Activated T-helper 1 cell treated with anti-CD3 and anti-CD28 coated beads, Interleukin-12 subunit alpha, Interleukin-12 subunit beta, Interleukin-2, Interleukin-4 antibody, amounts not matched to agents 30 ng/mL and 10 ng/mL and 1 ng/mL, durations not matched to agents 14 hours and 24 hours and 36 hours (primary cell): ENCODE measurements at regions of chr9 and their contacts with region 1.

Region 1: DNA sequence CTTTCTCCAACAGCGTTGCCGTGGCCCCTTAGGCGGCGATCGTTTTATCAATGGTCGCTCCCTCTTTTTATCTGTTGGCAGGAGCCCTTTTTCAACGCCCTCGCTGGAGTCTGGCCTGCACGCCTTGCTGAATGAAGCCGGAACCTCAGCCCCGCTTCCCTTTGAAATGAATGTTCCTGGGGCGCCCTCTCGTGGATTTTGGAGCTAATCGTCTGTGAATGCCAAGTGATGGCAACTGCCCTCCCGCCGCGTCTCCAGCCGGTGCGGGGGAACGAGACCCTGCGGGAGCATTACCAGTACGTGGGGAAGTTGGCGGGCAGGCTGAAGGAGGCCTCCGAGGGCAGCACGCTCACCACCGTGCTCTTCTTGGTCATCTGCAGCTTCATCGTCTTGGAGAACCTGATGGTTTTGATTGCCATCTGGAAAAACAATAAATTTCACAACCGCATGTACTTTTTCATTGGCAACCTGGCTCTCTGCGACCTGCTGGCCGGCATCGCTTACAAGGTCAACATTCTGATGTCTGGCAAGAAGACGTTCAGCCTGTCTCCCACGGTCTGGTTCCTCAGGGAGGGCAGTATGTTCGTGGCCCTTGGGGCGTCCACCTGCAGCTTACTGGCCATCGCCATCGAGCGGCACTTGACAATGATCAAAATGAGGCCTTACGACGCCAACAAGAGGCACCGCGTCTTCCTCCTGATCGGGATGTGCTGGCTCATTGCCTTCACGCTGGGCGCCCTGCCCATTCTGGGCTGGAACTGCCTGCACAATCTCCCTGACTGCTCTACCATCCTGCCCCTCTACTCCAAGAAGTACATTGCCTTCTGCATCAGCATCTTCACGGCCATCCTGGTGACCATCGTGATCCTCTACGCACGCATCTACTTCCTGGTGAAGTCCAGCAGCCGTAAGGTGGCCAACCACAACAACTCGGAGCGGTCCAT is 10.0 kb downstream of the S1PR3 start:
- DNase-seq: peak; percentile 58
- H3K4me3 Mint-ChIP-seq: no peak overlapping the region
- H3K27ac Mint-ChIP-seq: no peak overlapping the region
- H3K4me1 Mint-ChIP-seq: peaks cover 6% of the 10 kb centered on the region
- H3K27me3 Mint-ChIP-seq: peaks cover 16% of the 10 kb centered on the region

Region 2: GRCh38 chr9:87950765-87951488 is 1050.3 kb before region 1 on chr9:
- intact Hi-C with region 1: loop called (anchors 2 kb)
- DNase-seq: no peak
- H3K4me3 Mint-ChIP-seq: no peak overlapping the region
- H3K27ac Mint-ChIP-seq: no peak overlapping the region
- H3K4me1 Mint-ChIP-seq: no peaks in the 10 kb centered on the region
- H3K27me3 Mint-ChIP-seq: peaks cover 18% of the 10 kb centered on the region

Region 3: DNA sequence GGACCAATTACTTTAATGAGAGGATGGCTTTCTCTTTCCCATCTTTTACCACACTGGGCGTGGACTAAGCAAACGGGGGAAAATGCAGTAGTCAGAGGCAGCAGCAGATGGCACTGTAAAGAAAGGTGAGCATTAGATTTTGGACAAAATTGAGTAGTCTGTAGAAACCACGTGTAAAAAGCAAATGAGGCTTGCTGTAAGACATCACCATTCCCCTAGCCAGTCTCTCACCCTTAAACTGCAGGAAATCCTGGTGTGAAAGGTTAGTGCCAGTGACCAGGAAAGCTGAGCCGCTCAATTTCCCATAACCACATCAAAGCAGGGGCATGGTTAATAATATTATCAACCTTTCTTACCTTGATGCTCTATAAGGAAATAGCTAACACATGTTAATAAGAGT is 894.8 kb before region 1 on chr9:
- intact Hi-C with region 1: loop called (anchors 5 kb)
- DNase-seq: peak; percentile 7
- H3K4me3 Mint-ChIP-seq: no peak overlapping the region
- H3K27ac Mint-ChIP-seq: no peak overlapping the region
- H3K4me1 Mint-ChIP-seq: no peaks in the 10 kb centered on the region
- H3K27me3 Mint-ChIP-seq: peaks cover 9% of the 10 kb centered on the region

Region 4: DNA sequence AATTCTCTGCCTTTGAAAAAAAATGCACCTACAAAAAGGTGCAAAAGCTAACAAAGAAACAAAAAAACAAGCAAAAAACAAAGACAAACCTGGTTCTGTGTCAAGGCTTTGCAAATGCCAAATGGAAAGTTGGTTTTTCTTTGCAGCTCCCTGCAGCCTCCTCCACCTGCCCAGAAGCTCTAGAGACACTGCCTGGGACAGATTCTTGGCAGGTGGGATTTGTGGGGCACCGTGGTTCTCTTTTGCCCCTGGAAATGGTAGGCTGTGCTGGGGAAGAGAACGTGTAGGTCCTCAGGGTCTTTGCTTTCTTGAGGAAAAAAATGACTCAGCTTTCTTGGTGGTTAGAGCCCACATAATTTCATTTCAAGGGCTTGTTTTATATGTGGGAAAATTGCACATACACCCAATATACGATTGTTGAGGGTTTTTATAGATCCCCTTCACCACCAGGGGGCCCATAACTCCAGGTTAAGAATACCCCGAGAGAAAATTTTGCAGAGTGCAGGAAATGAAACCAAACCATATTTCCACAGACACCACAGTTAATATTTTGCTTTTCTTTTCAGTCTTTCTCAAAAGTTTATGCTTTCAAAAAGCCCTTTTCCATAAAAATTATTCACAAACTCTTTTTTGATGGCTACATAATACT is 407.6 kb before region 1 on chr9:
- intact Hi-C with region 1: loop called (anchors 1 kb)
- DNase-seq: peak; percentile 19
- H3K4me3 Mint-ChIP-seq: no peak overlapping the region
- H3K27ac Mint-ChIP-seq: no peak overlapping the region
- H3K4me1 Mint-ChIP-seq: peaks cover 8% of the 10 kb centered on the region
- H3K27me3 Mint-ChIP-seq: peaks cover 21% of the 10 kb centered on the region

Region 5: GRCh38 chr9:88660611-88661010 is 340.6 kb before region 1 on chr9:
- intact Hi-C with region 1: loop called (anchors 1 kb)
- DNase-seq: no peak
- H3K4me3 Mint-ChIP-seq: no peak overlapping the region
- H3K27ac Mint-ChIP-seq: no peak overlapping the region
- H3K4me1 Mint-ChIP-seq: no peaks in the 10 kb centered on the region
- H3K27me3 Mint-ChIP-seq: peaks cover 9% of the 10 kb centered on the region

Region 6: GRCh38 chr9:88973281-88974152 is 27.7 kb before region 1 on chr9:
- intact Hi-C with region 1: no loop called
- DNase-seq: no peak
- H3K4me3 Mint-ChIP-seq: no peak overlapping the region
- H3K27ac Mint-ChIP-seq: no peak overlapping the region
- H3K4me1 Mint-ChIP-seq: peaks cover 5% of the 10 kb centered on the region
- H3K27me3 Mint-ChIP-seq: peaks cover 6% of the 10 kb centered on the region

Region 7: GRCh38 chr9:89096807-89097206 is 95.6 kb after region 1 on chr9:
- intact Hi-C with region 1: no loop called
- DNase-seq: no peak
- H3K4me3 Mint-ChIP-seq: no peak overlapping the region
- H3K27ac Mint-ChIP-seq: no peak overlapping the region
- H3K4me1 Mint-ChIP-seq: no peaks in the 10 kb centered on the region
- H3K27me3 Mint-ChIP-seq: peaks cover 14% of the 10 kb centered on the region